ENCODE measurements at regions of chr6 and their contacts with region 1.

Region 1: GRCh38 chr6:16481697-16482399 is 243.5 kb downstream of the GMPR start:
- DNase-seq: peak; percentile 24 to 93 (median 52)
- ATAC-seq: peak; percentile 82
- H3K4me3 ChIP-seq: no peak overlapping the region
- H3K4me3 Mint-ChIP-seq: peak overlapping the region; percentile 21
- H3K27ac ChIP-seq: peak overlapping the region; percentile 71 to 75
- H3K27ac Mint-ChIP-seq: peak overlapping the region; percentile 88
- H3K4me1 ChIP-seq: peaks cover 60% of the 10 kb centered on the region
- H3K4me1 Mint-ChIP-seq: peaks cover 73% of the 10 kb centered on the region
- H3K27me3 ChIP-seq: no peaks in the 10 kb centered on the region
- H3K27me3 Mint-ChIP-seq: no peaks in the 10 kb centered on the region
- CTCF ChIP-seq: no peak

Region 2: DNA sequence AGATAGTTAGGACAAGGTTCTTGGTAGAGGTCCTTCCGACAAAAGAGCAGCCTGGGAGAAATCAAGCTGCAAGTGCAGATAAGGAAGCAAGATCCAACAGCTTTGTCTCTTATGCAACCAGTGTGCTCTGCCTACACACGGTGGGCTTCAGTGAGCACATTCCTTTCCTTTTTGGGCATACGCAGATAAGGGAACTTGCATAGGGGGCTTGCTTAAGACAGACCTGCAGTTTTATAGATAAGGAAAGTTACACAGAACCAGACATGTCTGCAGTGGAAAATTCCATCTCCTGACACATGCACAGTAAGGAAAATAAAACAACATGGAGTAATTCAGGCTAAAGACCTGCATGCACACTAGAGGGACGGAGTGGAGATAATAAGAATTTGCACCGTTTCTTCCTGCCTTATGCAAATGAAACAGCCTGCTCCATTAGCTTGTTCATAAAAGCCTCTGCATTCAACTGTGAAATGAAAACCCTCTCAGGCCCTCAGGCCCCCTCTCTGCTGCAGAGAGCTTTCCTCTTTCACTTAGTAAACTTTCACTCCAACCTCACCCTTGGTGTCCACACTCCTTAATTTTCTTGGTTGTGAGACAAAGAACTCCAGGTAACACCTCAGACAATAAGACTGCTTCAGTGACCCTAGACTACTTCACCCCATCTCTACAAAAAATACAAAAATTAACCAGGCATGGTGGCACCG is 450.4 kb before region 1 on chr6:
- CTCF ChIA-PET with region 1: no interaction called
- POLR2A ChIA-PET with region 1: no interaction called
- intact Hi-C with region 1: no loop called
- DNase-seq: no peak
- ATAC-seq: no peak
- H3K4me3 ChIP-seq: no peak overlapping the region
- H3K4me3 Mint-ChIP-seq: no peak overlapping the region
- H3K27ac ChIP-seq: no peak overlapping the region
- H3K27ac Mint-ChIP-seq: no peak overlapping the region
- H3K4me1 ChIP-seq: no peaks in the 10 kb centered on the region
- H3K4me1 Mint-ChIP-seq: no peaks in the 10 kb centered on the region
- H3K27me3 ChIP-seq: no peaks in the 10 kb centered on the region
- H3K27me3 Mint-ChIP-seq: no peaks in the 10 kb centered on the region
- CTCF ChIP-seq: no peak

Region 3: GRCh38 chr6:16319813-16320532 is 161.9 kb before region 1 on chr6:
- CTCF ChIA-PET with region 1: interaction called, 3 read pairs
- POLR2A ChIA-PET with region 1: no interaction called
- intact Hi-C with region 1: loop called in 1 of 2 experiments (anchors 2 kb)
- DNase-seq: peak; percentile 41 to 89 (median 62)
- ATAC-seq: peak; percentile 55
- H3K4me3 ChIP-seq: peak overlapping the region; percentile 40
- H3K4me3 Mint-ChIP-seq: peak overlapping the region; percentile 70
- H3K27ac ChIP-seq: peak overlapping the region; percentile 63 to 93
- H3K27ac Mint-ChIP-seq: peak overlapping the region; percentile 94
- H3K4me1 ChIP-seq: peaks cover 82% of the 10 kb centered on the region
- H3K4me1 Mint-ChIP-seq: peaks cover 78% of the 10 kb centered on the region
- H3K27me3 ChIP-seq: no peaks in the 10 kb centered on the region
- H3K27me3 Mint-ChIP-seq: no peaks in the 10 kb centered on the region
- CTCF ChIP-seq: no peak

Region 4: GRCh38 chr6:16420715-16421461 is 61.0 kb before region 1 on chr6:
- CTCF ChIA-PET with region 1: no interaction called
- POLR2A ChIA-PET with region 1: interaction called, 4 read pairs
- intact Hi-C with region 1: loop called in 1 of 2 experiments (anchors 2 kb)
- DNase-seq: peak in 7 of 14 experiments; percentile 33 to 85 (median 38)
- ATAC-seq: peak; percentile 78
- H3K4me3 ChIP-seq: peak overlapping the region; percentile 30
- H3K4me3 Mint-ChIP-seq: peak overlapping the region; percentile 59
- H3K27ac ChIP-seq: peak overlapping the region; percentile 62 to 84
- H3K27ac Mint-ChIP-seq: peak overlapping the region; percentile 96
- H3K4me1 ChIP-seq: peaks cover 37% of the 10 kb centered on the region
- H3K4me1 Mint-ChIP-seq: peaks cover 42% of the 10 kb centered on the region
- H3K27me3 ChIP-seq: no peaks in the 10 kb centered on the region
- H3K27me3 Mint-ChIP-seq: no peaks in the 10 kb centered on the region
- CTCF ChIP-seq: no peak

Region 5: DNA sequence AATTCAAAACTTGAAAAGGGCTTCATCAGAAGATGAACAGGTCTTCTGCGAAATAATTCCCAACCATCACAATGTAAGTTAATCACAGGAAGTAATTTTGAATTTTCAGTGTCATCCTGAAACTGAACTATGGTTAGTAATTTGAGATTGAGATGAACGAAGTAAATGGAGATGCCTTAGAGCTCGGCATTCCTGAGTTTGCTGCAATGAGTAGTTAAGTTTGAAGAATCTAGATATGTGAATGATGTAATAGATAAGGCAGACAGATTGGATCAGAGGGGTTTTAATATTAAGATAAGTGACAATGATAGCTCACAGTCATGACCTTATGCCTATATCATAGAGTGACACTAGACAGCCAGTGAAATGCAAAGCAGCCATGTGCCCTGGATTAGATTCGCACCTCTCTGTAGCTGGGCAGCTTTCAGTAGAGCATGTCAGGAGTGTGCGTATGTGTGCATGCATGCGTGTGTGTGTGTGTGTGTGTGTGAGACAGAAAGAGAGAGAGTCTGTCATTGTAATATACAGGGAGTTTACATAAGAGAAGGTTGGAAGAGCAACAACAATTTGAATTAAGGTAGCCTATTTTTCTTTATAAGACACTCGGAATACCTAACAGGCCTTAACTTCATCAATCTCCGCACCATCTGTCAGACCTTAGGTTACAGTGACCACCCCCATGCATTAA is 10.5 kb before region 1 on chr6:
- CTCF ChIA-PET with region 1: interaction called, 5 read pairs
- POLR2A ChIA-PET with region 1: interaction called, 3 read pairs
- intact Hi-C with region 1: loop called in 1 of 2 experiments (anchors 1 kb)
- DNase-seq: peak in 2 of 14 experiments; percentile 33 to 49
- ATAC-seq: no peak
- H3K4me3 ChIP-seq: no peak overlapping the region
- H3K4me3 Mint-ChIP-seq: no peak overlapping the region
- H3K27ac ChIP-seq: no peak overlapping the region
- H3K27ac Mint-ChIP-seq: peak overlapping the region; percentile 56
- H3K4me1 ChIP-seq: peaks cover 34% of the 10 kb centered on the region
- H3K4me1 Mint-ChIP-seq: peaks cover 67% of the 10 kb centered on the region
- H3K27me3 ChIP-seq: no peaks in the 10 kb centered on the region
- H3K27me3 Mint-ChIP-seq: no peaks in the 10 kb centered on the region
- CTCF ChIP-seq: no peak